Endothelial cell of umbilical vein (primary cell): ENCODE measurements at regions of chr7 and their contacts with region 1.

Region 1: DNA sequence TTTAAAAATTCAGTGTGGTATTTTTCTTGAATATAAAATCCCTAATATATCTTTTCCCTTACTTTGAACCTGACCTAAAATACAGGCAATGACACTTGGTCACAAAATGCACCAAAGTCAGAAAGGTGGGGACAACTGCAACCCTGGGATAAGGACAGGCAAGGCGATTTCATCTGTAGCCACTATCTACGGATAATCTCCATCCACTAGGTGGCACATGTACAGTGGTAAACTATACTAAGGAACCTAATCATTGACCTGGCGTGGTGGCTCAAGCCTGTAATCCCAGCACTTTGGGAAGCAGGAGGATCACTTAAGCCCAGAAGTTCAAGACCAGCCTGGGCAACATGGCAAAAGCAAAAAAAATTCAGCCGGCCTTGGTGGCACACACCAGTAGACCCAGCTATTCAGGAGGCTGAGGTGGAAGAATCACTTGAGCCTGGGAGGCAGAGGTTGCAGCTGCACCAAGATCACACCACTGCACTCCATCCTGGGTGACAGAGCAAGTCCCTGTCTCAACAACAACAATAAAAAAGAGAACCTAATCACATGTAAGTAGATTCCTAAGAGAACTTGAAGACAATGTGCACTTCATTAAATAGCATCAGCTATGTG is 98.9 kb downstream of the KMT2C start:
- DNase-seq: peak; percentile 45
- H3K4me3 ChIP-seq: no peak overlapping the region
- H3K27ac ChIP-seq: no peak overlapping the region
- H3K4me1 ChIP-seq: no peaks in the 10 kb centered on the region
- H3K27me3 ChIP-seq: no peaks in the 10 kb centered on the region
- CTCF ChIP-seq: peak; percentile 40 to 51
- POLR2A ChIP-seq: no peak

Region 2: DNA sequence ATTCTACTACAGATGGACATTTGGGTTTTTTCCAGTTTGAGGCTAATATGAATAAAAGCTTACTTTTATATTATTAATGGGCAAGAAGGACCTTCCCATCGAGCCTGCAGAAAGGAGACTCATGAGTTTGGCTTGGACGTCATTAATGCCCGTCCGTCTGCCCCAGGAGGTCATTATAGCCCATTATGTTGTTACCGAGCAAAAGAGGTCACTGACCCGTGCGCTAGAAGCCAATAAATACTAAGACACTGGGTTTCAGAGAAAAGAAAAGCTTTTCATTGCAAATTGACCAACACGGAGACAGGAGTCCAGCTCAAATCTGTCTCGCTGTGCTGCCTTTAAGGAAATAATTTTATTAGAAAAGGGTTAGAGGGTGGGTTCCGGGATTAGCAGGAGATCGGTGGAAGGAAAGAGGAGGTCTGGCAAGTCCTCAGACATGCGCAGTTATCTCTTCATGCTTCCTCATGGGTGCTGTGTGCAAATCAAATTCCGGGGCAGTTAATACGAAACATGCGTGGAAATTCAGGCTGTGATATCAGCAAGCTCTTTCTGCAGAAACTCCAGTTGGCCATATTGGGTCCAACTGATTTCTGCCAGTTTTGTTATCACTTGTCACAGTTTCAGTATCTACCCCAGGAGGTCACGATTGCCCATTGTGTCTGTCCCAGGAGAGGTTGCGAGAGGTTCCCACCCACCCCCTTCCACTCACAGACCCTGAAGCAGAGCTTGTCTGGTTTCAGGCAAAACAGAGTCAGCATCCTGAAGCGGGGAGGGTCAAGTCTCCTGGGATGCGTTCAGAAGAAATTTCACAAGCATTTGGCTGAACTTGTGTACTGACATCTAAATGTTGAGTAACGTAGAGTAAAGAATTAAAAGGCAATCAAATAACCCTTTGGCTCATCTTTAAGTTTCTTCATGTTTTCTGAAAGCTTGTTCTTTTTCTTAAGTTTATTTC is 381.7 kb before region 1 on chr7:
- CTCF ChIA-PET with region 1: no interaction called
- POLR2A ChIA-PET with region 1: no interaction called
- dilution Hi-C with region 1: no loop called
- intact Hi-C with region 1: no loop called
- DNase-seq: no peak
- H3K4me3 ChIP-seq: no peak overlapping the region
- H3K27ac ChIP-seq: no peak overlapping the region
- H3K4me1 ChIP-seq: no peaks in the 10 kb centered on the region
- H3K27me3 ChIP-seq: peaks cover 0 to 5% of the 10 kb centered on the region in 2 experiments
- CTCF ChIP-seq: no peak
- POLR2A ChIP-seq: no peak

Region 3: GRCh38 chr7:152011860-152012259 is 325.0 kb before region 1 on chr7:
- CTCF ChIA-PET with region 1: no interaction called
- POLR2A ChIA-PET with region 1: no interaction called
- dilution Hi-C with region 1: no loop called
- intact Hi-C with region 1: no loop called
- DNase-seq: no peak
- H3K4me3 ChIP-seq: no peak overlapping the region
- H3K27ac ChIP-seq: no peak overlapping the region
- H3K4me1 ChIP-seq: no peaks in the 10 kb centered on the region
- H3K27me3 ChIP-seq: no peaks in the 10 kb centered on the region
- CTCF ChIP-seq: no peak
- POLR2A ChIP-seq: no peak

Region 4: DNA sequence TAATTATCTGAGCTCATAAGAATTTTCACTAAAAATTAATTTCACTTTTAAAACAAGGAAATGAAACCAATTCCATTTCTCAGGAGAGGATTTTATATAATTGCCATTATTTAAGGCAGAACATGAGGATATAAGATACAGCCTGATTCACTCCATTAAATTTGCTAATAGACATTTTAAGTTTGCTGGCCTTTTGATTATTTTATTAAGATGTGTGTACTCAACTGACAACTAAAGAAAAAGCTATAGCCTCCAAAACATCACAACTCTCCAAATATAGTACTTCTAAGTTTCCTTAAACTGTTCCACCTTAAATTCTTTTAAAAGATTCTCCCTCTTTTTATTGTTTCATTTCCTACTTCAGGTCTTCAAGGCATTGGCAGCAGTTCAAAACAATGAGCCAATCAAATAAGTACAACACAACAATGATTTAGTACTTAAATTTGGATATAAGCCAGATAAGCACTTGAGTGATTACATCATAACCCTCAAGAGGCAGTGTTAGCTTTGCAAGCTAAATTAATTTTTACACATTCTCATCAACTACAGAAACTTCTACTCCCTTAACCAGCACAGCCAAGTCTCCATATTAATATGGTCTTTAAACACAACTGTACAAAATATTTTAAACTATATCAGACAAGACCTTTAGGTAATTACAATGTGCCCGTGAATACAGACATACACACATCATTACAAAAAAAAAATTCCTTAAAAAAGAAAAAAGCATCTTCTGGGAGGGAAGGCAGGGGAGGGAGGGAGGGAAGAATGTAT is 22.8 kb before region 1 on chr7:
- CTCF ChIA-PET with region 1: interaction called, 11 read pairs
- POLR2A ChIA-PET with region 1: no interaction called
- dilution Hi-C with region 1: no loop called
- intact Hi-C with region 1: no loop called
- DNase-seq: peak; percentile 96
- H3K4me3 ChIP-seq: peak overlapping the region in 1 of 3 experiments; percentile 40
- H3K27ac ChIP-seq: peak overlapping the region; percentile 73
- H3K4me1 ChIP-seq: peaks cover 12% of the 10 kb centered on the region
- H3K27me3 ChIP-seq: no peaks in the 10 kb centered on the region
- CTCF ChIP-seq: no peak
- POLR2A ChIP-seq: no peak

Region 5: GRCh38 chr7:152354066-152354465 is 17.2 kb after region 1 on chr7:
- CTCF ChIA-PET with region 1: interaction called, 11 read pairs
- POLR2A ChIA-PET with region 1: no interaction called
- dilution Hi-C with region 1: no loop called
- intact Hi-C with region 1: no loop called
- DNase-seq: no peak
- H3K4me3 ChIP-seq: no peak overlapping the region
- H3K27ac ChIP-seq: no peak overlapping the region
- H3K4me1 ChIP-seq: no peaks in the 10 kb centered on the region
- H3K27me3 ChIP-seq: no peaks in the 10 kb centered on the region
- CTCF ChIP-seq: no peak
- POLR2A ChIP-seq: no peak

Region 6: DNA sequence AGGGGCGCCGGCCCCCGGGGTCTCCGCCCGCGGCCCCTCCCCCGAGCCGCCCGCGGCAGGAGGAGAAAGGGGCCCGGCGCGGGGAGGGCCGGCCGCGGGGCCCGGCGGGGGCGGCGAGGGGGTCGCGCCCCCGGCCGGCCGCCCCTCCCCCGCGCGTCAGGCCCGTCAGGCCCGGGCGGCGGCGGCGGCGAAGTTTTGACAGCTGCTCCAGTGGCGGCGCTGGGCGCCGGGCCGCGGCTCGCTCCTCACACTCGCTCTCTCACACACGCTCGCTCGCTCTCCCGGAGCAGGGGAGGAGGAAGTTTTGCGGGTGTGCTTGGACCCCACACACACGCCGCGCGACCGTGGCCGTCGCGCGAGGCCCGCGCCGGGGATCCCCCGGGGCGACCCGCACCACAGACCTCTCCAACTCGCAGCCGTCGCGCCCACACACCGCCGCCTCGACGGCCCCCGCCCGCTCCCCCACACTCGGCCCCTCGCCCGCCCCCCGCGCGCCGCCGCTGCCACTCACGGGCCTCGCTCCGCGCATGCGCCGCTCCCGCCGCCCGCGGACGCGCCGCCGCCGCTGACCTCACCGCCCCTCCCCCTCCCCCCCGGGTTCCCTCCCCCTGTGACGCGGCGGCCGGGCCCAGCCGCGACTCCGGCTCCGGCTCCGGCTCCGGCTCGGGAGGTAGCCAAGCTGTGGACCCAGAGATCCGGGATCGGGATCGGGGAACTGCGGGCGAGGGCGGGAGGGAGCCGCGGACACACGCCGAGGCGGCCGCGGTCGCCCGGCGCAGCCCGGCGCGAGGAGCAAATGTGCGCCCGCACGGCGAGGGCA is 99.5 kb after region 1 on chr7:
- CTCF ChIA-PET with region 1: interaction called, 16 read pairs
- POLR2A ChIA-PET with region 1: no interaction called
- dilution Hi-C with region 1: no loop called
- intact Hi-C with region 1: loop called (anchors 1 kb)
- DNase-seq: peak; percentile 91
- H3K4me3 ChIP-seq: peak overlapping the region in 2 of 3 experiments; percentile 47 to 92
- H3K27ac ChIP-seq: peak overlapping the region; percentile 72
- H3K4me1 ChIP-seq: peaks cover 9% of the 10 kb centered on the region
- H3K27me3 ChIP-seq: no peaks in the 10 kb centered on the region
- CTCF ChIP-seq: no peak
- POLR2A ChIP-seq: no peak

Region 7: DNA sequence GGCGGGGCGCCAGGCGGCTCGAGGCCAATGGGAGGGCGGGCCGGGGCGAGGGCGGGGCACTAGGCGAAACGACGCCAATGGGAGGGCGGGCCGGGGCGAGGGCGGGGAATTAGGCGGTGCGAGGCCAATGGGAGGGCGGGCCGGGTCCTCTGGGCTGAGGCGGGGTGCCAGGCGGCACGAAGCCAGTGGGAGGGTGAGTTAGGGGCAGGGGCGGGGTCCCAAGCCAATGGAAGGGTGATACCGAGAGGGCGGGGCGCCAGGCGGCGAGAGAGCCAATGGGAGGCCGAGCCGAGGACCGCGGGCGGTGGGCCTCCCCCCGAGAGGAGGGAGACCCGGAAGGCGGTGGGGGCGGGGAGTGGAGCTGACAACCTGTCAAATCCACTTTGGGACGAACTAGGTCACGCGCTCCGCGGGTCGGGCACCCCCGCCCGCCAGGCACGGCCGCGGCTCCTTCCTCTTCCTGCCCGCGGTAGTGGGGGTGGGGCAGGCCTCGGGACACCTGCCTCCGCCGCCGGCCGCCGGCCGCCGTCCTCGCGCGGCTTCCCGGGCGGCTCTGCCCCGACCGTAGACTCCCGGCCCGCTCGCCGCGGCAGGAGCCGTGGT is 126.9 kb after region 1 on chr7:
- CTCF ChIA-PET with region 1: interaction called, 5 read pairs
- POLR2A ChIA-PET with region 1: no interaction called
- dilution Hi-C with region 1: no loop called
- intact Hi-C with region 1: loop called (anchors 1 kb)
- DNase-seq: peak; percentile 99
- H3K4me3 ChIP-seq: peak overlapping the region; percentile 42 to 97 (median 69)
- H3K27ac ChIP-seq: peak overlapping the region; percentile 91
- H3K4me1 ChIP-seq: peaks cover 12% of the 10 kb centered on the region
- H3K27me3 ChIP-seq: no peaks in the 10 kb centered on the region
- CTCF ChIP-seq: no peak
- POLR2A ChIP-seq: peak; percentile 76

Region 8: GRCh38 chr7:152709287-152710152 is 372.7 kb after region 1 on chr7:
- CTCF ChIA-PET with region 1: interaction called, 73 read pairs
- POLR2A ChIA-PET with region 1: no interaction called
- dilution Hi-C with region 1: no loop called
- intact Hi-C with region 1: loop called (anchors 1 kb)
- DNase-seq: no peak
- H3K4me3 ChIP-seq: no peak overlapping the region
- H3K27ac ChIP-seq: no peak overlapping the region
- H3K4me1 ChIP-seq: no peaks in the 10 kb centered on the region
- H3K27me3 ChIP-seq: no peaks in the 10 kb centered on the region
- CTCF ChIP-seq: no peak
- POLR2A ChIP-seq: no peak